CD4-positive, alpha-beta memory T cell (primary cell): ENCODE measurements at regions of chr1 and their contacts with region 1.

Region 1: GRCh38 chr1:12124693-12125421 is 41.9 kb upstream of the TNFRSF1B start:
- DNase-seq: peak; percentile 74 to 84 (median 76)
- H3K4me3 ChIP-seq: no peak overlapping the region
- H3K4me3 Mint-ChIP-seq: peak overlapping the region in 7 of 8 donors; percentile 37 to 67 (median 59)
- H3K27ac ChIP-seq: no peak overlapping the region
- H3K27ac Mint-ChIP-seq: peak overlapping the region; percentile 27 to 93 (median 84)
- H3K4me1 ChIP-seq: peaks cover 46% of the 10 kb centered on the region
- H3K4me1 Mint-ChIP-seq: peaks cover 25 to 61% (median 45%) of the 10 kb centered on the region in 4 donors
- H3K27me3 ChIP-seq: no peaks in the 10 kb centered on the region
- H3K27me3 Mint-ChIP-seq: no peaks in the 10 kb centered on the region

Region 2: DNA sequence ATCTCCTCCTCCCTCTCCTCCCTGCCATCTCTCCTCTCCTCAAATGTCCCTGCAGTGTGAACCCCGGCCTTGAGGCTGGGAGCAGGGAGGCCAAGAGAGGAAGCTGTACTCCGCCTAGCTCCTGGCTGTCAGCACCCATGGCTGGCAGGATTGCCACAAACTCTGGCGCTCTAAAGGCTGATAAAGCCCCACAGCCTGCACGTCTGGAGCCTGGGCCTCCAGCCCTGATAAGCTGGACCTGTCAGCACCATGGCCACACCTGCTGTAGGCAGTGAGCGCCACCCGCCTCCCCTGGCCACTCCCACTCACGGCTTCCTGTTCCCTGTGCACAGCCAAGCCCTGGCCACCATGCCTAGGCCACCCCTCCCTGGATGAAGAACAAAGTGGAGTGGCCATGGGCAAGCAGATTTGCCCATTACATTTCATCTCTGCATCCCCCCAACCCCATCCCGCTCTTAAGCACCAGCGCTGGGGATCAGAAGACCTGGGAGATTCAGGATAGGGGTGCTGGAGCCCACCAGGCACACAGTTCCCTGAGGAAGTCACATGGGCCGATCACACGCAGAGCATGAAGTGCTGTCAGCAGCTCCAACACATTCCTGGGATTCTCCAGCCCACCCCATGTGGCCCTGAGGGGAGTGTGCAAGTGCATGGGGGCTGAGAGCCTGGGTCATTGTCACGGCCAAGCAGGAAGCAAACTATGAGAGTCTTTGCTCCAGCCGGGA is 241.9 kb before region 1 on chr1:
- CTCF ChIA-PET with region 1: no interaction called
- POLR2A ChIA-PET with region 1: no interaction called
- intact Hi-C with region 1: no loop called
- DNase-seq: no peak
- H3K4me3 ChIP-seq: no peak overlapping the region
- H3K4me3 Mint-ChIP-seq: no peak overlapping the region
- H3K27ac ChIP-seq: no peak overlapping the region
- H3K27ac Mint-ChIP-seq: no peak overlapping the region
- H3K4me1 ChIP-seq: no peaks in the 10 kb centered on the region
- H3K4me1 Mint-ChIP-seq: no peaks in the 10 kb centered on the region
- H3K27me3 ChIP-seq: no peaks in the 10 kb centered on the region
- H3K27me3 Mint-ChIP-seq: peaks cover 10 to 20% of the 10 kb centered on the region in 2 donors

Region 3: DNA sequence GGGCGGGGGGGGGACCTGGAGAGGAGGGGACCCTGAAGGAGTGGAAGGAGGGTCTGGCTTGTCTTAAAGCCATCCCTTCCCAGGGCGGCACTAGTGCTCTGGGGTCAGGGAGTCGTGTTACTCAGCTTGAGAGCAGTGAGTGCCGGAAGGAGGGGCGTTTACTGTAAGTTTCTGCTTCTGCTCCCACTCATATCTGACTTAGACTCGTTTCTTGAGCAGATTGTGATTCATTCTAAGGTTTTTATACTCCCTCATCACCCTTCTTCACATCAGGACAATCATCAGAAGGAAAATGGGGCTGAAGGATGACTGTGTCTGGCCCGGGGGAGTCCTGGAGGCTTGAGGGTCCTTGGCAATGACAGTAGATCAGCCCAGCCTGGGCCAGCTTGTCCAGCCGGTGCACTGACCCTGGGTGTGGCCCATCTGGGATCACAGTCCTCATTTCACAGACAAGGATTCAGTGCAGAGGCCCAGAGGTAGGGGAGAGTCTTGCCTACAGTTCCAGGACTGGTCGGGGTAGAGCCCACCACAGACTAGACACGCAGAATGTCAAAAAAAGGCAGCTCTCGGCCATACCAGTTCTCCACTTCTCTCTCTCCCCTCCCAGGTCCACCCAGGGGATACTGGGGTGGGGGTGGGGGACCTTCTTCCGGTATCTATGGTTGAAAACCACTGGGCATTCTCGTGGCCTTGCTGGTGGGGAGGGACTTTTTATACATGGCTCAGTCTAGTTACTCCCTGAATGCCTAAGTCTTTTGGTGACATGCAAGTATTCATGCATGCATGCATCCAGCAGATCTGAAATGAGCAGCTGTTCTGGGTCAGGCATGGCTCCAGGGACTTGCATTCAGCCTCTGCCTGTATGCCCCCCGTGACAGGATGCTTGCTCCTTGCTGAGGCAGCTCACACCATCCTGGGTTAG is 56.7 kb before region 1 on chr1:
- CTCF ChIA-PET with region 1: no interaction called
- POLR2A ChIA-PET with region 1: no interaction called
- intact Hi-C with region 1: no loop called
- DNase-seq: peak in 1 of 5 donors; percentile 19
- H3K4me3 ChIP-seq: no peak overlapping the region
- H3K4me3 Mint-ChIP-seq: peak overlapping the region in 5 of 8 donors; percentile 43 to 82 (median 58)
- H3K27ac ChIP-seq: no peak overlapping the region
- H3K27ac Mint-ChIP-seq: peak overlapping the region in 2 of 7 donors; percentile 43 to 57
- H3K4me1 ChIP-seq: peaks cover 60% of the 10 kb centered on the region
- H3K4me1 Mint-ChIP-seq: peaks cover 33 to 57% (median 40%) of the 10 kb centered on the region in 4 donors
- H3K27me3 ChIP-seq: peaks cover 7% of the 10 kb centered on the region
- H3K27me3 Mint-ChIP-seq: peaks cover 38 to 51% of the 10 kb centered on the region in 2 donors

Region 4: DNA sequence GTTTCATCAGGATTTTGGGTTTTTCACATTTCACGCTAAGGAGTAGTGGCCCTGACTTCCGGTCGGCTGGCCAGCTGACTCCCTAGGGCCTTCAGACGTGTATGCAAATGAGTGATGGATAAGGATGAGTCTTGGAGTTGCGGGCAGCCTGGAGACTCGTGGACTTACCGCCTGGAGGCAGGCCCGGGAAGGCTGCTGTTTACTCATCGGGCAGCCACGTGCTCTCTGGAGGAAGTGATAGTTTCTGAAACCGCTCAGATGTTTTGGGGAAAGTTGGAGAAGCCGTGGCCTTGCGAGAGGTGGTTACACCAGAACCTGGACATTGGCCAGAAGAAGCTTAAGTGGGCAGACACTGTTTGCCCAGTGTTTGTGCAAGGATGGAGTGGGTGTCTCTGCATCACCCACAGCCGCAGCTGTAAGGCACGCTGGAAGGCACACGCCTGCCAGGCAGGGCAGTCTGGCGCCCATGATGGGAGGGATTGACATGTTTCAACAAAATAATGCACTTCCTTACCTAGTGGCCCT is 18.8 kb after region 1 on chr1:
- CTCF ChIA-PET with region 1: interaction called, 79 read pairs
- POLR2A ChIA-PET with region 1: interaction called, 1,713 read pairs
- intact Hi-C with region 1: no loop called
- DNase-seq: peak in 2 of 5 donors; percentile 25 to 33
- H3K4me3 ChIP-seq: peak overlapping the region in 1 of 2 donors; percentile 17
- H3K4me3 Mint-ChIP-seq: peak overlapping the region in 7 of 8 donors; percentile 55 to 79 (median 70)
- H3K27ac ChIP-seq: peak overlapping the region; percentile 31
- H3K27ac Mint-ChIP-seq: peak overlapping the region; percentile 82 to 96 (median 92)
- H3K4me1 ChIP-seq: peaks cover 62% of the 10 kb centered on the region
- H3K4me1 Mint-ChIP-seq: peaks cover 30 to 65% (median 42%) of the 10 kb centered on the region in 4 donors
- H3K27me3 ChIP-seq: no peaks in the 10 kb centered on the region
- H3K27me3 Mint-ChIP-seq: no peaks in the 10 kb centered on the region

Region 5: GRCh38 chr1:12166834-12167492 is 42.1 kb after region 1 on chr1 and contains the start of gene TNFRSF1B:
- CTCF ChIA-PET with region 1: interaction called, 25 read pairs
- POLR2A ChIA-PET with region 1: interaction called, 1,713 read pairs
- intact Hi-C with region 1: no loop called
- DNase-seq: peak; percentile 57 to 75 (median 63)
- H3K4me3 ChIP-seq: peak within 1 kb of the TSS; percentile 85 to 93
- H3K4me3 Mint-ChIP-seq: peak within 1 kb of the TSS; percentile 100
- H3K27ac ChIP-seq: peak within 1 kb of the TSS; percentile 88
- H3K27ac Mint-ChIP-seq: peak within 1 kb of the TSS; percentile 99 to 100 (median 99)
- H3K4me1 ChIP-seq: peaks cover 85% of the 10 kb centered on the region
- H3K4me1 Mint-ChIP-seq: peaks cover 43 to 81% (median 65%) of the 10 kb centered on the region in 4 donors
- H3K27me3 ChIP-seq: no peaks in the 10 kb centered on the region
- H3K27me3 Mint-ChIP-seq: no peaks in the 10 kb centered on the region
- total RNA-seq, gene TNFRSF1B: 111 TPM

Region 6: GRCh38 chr1:12196641-12197482 is 72.0 kb after region 1 on chr1:
- CTCF ChIA-PET with region 1: interaction called, 90 read pairs
- POLR2A ChIA-PET with region 1: interaction called, 25 read pairs
- intact Hi-C with region 1: no loop called
- DNase-seq: no peak
- H3K4me3 ChIP-seq: no peak overlapping the region
- H3K4me3 Mint-ChIP-seq: no peak overlapping the region
- H3K27ac ChIP-seq: no peak overlapping the region
- H3K27ac Mint-ChIP-seq: peak overlapping the region in 5 of 7 donors; percentile 6 to 81 (median 50)
- H3K4me1 ChIP-seq: peaks cover 23% of the 10 kb centered on the region
- H3K4me1 Mint-ChIP-seq: peaks cover 11 to 26% (median 14%) of the 10 kb centered on the region in 4 donors
- H3K27me3 ChIP-seq: no peaks in the 10 kb centered on the region
- H3K27me3 Mint-ChIP-seq: no peaks in the 10 kb centered on the region

Region 7: GRCh38 chr1:12215118-12215961 is 90.5 kb after region 1 on chr1:
- CTCF ChIA-PET with region 1: interaction called, 296 read pairs
- POLR2A ChIA-PET with region 1: interaction called, 107 read pairs
- intact Hi-C with region 1: no loop called
- DNase-seq: no peak
- H3K4me3 ChIP-seq: no peak overlapping the region
- H3K4me3 Mint-ChIP-seq: no peak overlapping the region
- H3K27ac ChIP-seq: no peak overlapping the region
- H3K27ac Mint-ChIP-seq: peak overlapping the region in 3 of 7 donors; percentile 32 to 47 (median 41)
- H3K4me1 ChIP-seq: peaks cover 22% of the 10 kb centered on the region
- H3K4me1 Mint-ChIP-seq: peaks cover 17 to 34% (median 19%) of the 10 kb centered on the region in 4 donors
- H3K27me3 ChIP-seq: no peaks in the 10 kb centered on the region
- H3K27me3 Mint-ChIP-seq: peaks cover 0 to 2% of the 10 kb centered on the region in 2 donors

Region 8: DNA sequence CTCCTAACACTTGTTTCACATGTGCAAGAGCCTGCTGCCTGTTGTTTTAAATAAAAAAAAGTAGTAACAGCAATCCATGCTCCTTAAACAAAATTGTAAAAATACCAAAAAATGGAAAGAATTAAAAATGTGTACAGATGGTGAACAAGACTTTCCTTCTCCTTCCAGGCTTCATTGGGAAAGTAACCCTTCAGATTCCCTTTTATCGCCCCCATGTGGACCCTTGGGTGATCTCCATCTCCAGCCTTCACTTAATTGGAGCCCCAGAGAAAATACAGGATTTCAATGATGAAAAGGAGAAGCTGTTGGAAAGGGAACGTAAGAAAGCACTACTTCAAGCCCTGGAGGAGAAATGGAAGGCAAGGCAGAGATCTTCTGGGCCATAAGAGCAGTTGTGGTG is 119.2 kb after region 1 on chr1:
- CTCF ChIA-PET with region 1: interaction called, 169 read pairs
- POLR2A ChIA-PET with region 1: no interaction called
- intact Hi-C with region 1: no loop called
- DNase-seq: peak in 2 of 5 donors; percentile 13 to 38
- H3K4me3 ChIP-seq: no peak overlapping the region
- H3K4me3 Mint-ChIP-seq: no peak overlapping the region
- H3K27ac ChIP-seq: no peak overlapping the region
- H3K27ac Mint-ChIP-seq: no peak overlapping the region
- H3K4me1 ChIP-seq: no peaks in the 10 kb centered on the region
- H3K4me1 Mint-ChIP-seq: peaks cover 0 to 13% (median 5%) of the 10 kb centered on the region in 4 donors
- H3K27me3 ChIP-seq: no peaks in the 10 kb centered on the region
- H3K27me3 Mint-ChIP-seq: no peaks in the 10 kb centered on the region

Region 9: GRCh38 chr1:12275369-12275768 is 150.5 kb after region 1 on chr1:
- CTCF ChIA-PET with region 1: interaction called, 13 read pairs
- POLR2A ChIA-PET with region 1: interaction called, 3 read pairs
- intact Hi-C with region 1: no loop called
- DNase-seq: peak in 4 of 5 donors; percentile 7 to 19 (median 14)
- H3K4me3 ChIP-seq: no peak overlapping the region
- H3K4me3 Mint-ChIP-seq: no peak overlapping the region
- H3K27ac ChIP-seq: no peak overlapping the region
- H3K27ac Mint-ChIP-seq: peak overlapping the region in 1 of 7 donors; percentile 82
- H3K4me1 ChIP-seq: no peaks in the 10 kb centered on the region
- H3K4me1 Mint-ChIP-seq: peaks cover 5 to 9% (median 8%) of the 10 kb centered on the region in 4 donors
- H3K27me3 ChIP-seq: no peaks in the 10 kb centered on the region
- H3K27me3 Mint-ChIP-seq: no peaks in the 10 kb centered on the region

Region 10: DNA sequence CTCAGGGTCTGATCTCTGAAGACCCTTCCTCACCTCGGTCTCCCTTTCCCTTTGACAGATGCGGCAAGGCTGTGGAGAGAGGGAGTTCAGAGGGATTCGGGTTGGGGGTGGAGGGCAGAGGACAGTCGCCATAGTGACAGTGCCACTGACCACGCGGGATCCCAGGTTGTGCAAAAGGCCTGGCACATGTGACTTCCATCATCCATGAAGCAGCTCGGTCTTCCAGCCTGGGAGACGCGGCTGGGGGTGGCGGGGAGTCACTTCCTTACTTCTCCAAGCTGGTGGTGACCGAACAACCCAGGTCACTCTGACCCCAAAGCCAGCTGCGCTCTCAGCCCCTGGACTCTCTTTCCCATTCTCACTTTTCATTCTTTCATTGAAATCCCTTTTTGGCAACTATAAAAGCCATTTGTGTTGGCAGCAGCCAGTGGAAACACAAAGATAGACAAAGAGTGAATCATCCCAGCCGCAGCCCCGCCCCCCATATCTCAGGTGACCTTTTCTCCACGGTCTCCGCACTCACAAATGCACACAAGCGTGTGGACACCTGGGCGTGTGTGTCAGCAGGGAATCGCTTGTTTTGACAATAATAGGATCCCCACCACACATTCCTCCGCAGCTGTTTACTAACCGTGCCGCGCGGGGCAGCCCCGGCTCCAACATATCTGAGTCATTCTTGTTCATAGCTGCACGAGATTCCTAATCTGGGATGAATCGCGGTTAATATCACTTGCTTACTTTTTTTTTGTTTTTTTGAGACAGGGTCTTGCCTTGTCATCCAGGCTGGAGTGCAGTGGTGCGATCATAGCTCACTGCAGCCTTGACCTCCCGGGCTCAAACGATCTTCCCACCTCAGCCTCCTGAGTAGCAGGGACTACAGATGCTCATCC is 424.8 kb after region 1 on chr1:
- CTCF ChIA-PET with region 1: no interaction called
- POLR2A ChIA-PET with region 1: no interaction called
- intact Hi-C with region 1: no loop called
- DNase-seq: no peak
- H3K4me3 ChIP-seq: no peak overlapping the region
- H3K4me3 Mint-ChIP-seq: no peak overlapping the region
- H3K27ac ChIP-seq: no peak overlapping the region
- H3K27ac Mint-ChIP-seq: no peak overlapping the region
- H3K4me1 ChIP-seq: no peaks in the 10 kb centered on the region
- H3K4me1 Mint-ChIP-seq: no peaks in the 10 kb centered on the region
- H3K27me3 ChIP-seq: no peaks in the 10 kb centered on the region
- H3K27me3 Mint-ChIP-seq: peaks cover 0 to 1% of the 10 kb centered on the region in 2 donors